ENCODE measurements at regions of chr17 and their contacts with region 1.

Region 1: GRCh38 chr17:50547035-50547735 is at the start of gene SPATA20:
- DNase-seq: peak; percentile 92
- ATAC-seq: peak; percentile 87
- H3K4me3 ChIP-seq: peak within 1 kb of the TSS in 4 of 5 experiments; percentile 20 to 62 (median 52)
- H3K4me3 Mint-ChIP-seq: peak within 1 kb of the TSS; percentile 84
- H3K27ac ChIP-seq: peak within 1 kb of the TSS in 1 of 2 donors; percentile 40
- H3K27ac Mint-ChIP-seq: peak within 1 kb of the TSS; percentile 78
- H3K4me1 ChIP-seq: peaks cover 14 to 21% of the 10 kb centered on the region in 2 donors
- H3K4me1 Mint-ChIP-seq: peaks cover 19% of the 10 kb centered on the region
- H3K27me3 ChIP-seq: peaks cover 0 to 11% (median 5%) of the 10 kb centered on the region in 4 experiments
- H3K27me3 Mint-ChIP-seq: peaks cover 7% of the 10 kb centered on the region
- CTCF ChIP-seq: peak; percentile 98
- total RNA-seq, gene SPATA20: 68.5 and 72.2 TPM in 2 replicates

Region 2: DNA sequence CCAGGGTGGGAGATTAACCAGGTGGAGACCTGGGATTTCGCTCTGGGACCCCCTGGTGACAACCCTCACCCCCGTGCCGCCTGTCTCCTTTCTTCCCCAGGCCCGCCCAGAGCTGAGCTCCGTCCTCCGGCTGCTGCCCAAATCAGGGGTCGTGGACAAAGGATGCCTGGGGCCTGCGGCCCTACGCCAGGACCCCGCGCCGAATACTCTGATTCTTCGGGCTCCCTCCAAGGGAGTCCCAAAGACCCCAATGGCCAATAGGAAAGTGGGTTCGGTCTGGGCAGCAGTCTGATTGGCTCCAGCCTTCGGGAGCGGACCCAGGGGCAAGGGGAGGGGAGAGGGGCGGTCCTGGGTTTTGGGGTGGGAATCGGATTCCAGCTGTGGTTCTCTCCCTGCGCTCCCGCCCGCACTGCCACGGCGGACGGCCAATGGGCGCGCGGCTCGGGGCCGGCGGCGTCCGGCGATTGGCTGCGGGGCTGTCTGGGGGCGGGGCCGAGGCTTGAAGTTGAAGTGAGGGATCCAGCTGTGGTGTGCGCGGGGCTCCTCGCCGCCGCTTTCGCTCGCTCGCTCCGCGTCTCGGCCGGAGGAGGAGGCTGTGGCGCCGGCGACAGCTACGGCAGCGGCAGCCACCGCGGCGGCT is 13.1 kb after region 1 on chr17 and contains the start of gene CACNA1G:
- CTCF ChIA-PET with region 1: interaction called, 5 read pairs
- POLR2A ChIA-PET with region 1: interaction called, 3 read pairs
- intact Hi-C with region 1: loop called (anchors 1 kb)
- DNase-seq: peak; percentile 90
- ATAC-seq: peak; percentile 89
- H3K4me3 ChIP-seq: peak within 1 kb of the TSS in 4 of 5 experiments; percentile 43 to 70 (median 60)
- H3K4me3 Mint-ChIP-seq: peak within 1 kb of the TSS; percentile 87
- H3K27ac ChIP-seq: no peak within 1 kb of the TSS
- H3K27ac Mint-ChIP-seq: no peak within 1 kb of the TSS
- H3K4me1 ChIP-seq: peaks cover 34 to 40% of the 10 kb centered on the region in 2 donors
- H3K4me1 Mint-ChIP-seq: peaks cover 30% of the 10 kb centered on the region
- H3K27me3 ChIP-seq: peaks cover 0 to 85% (median 37%) of the 10 kb centered on the region in 4 experiments
- H3K27me3 Mint-ChIP-seq: peaks cover 29% of the 10 kb centered on the region
- CTCF ChIP-seq: no peak
- total RNA-seq, gene CACNA1G: 0.05 and 0.12 TPM in 2 replicates

Region 3: GRCh38 chr17:50626037-50626574 is 78.9 kb after region 1 on chr17:
- CTCF ChIA-PET with region 1: interaction called, 45 read pairs
- POLR2A ChIA-PET with region 1: no interaction called
- intact Hi-C with region 1: no loop called
- DNase-seq: peak; percentile 69
- ATAC-seq: peak; percentile 70
- H3K4me3 ChIP-seq: no peak overlapping the region
- H3K4me3 Mint-ChIP-seq: no peak overlapping the region
- H3K27ac ChIP-seq: no peak overlapping the region
- H3K27ac Mint-ChIP-seq: no peak overlapping the region
- H3K4me1 ChIP-seq: peaks cover 0 to 6% of the 10 kb centered on the region in 2 donors
- H3K4me1 Mint-ChIP-seq: no peaks in the 10 kb centered on the region
- H3K27me3 ChIP-seq: peaks cover 0 to 61% (median 9%) of the 10 kb centered on the region in 4 experiments
- H3K27me3 Mint-ChIP-seq: peaks cover 45% of the 10 kb centered on the region
- CTCF ChIP-seq: peak; percentile 58

Region 4: GRCh38 chr17:50689956-50690886 is 143.0 kb after region 1 on chr17:
- CTCF ChIA-PET with region 1: interaction called, 5 read pairs
- POLR2A ChIA-PET with region 1: no interaction called
- intact Hi-C with region 1: loop called (anchors 1 kb)
- DNase-seq: no peak
- ATAC-seq: no peak
- H3K4me3 ChIP-seq: no peak overlapping the region
- H3K4me3 Mint-ChIP-seq: no peak overlapping the region
- H3K27ac ChIP-seq: no peak overlapping the region
- H3K27ac Mint-ChIP-seq: no peak overlapping the region
- H3K4me1 ChIP-seq: no peaks in the 10 kb centered on the region
- H3K4me1 Mint-ChIP-seq: no peaks in the 10 kb centered on the region
- H3K27me3 ChIP-seq: no peaks in the 10 kb centered on the region
- H3K27me3 Mint-ChIP-seq: no peaks in the 10 kb centered on the region
- CTCF ChIP-seq: no peak

Region 5: GRCh38 chr17:50956750-50957523 is 409.8 kb after region 1 on chr17:
- CTCF ChIA-PET with region 1: no interaction called
- POLR2A ChIA-PET with region 1: no interaction called
- intact Hi-C with region 1: loop called (anchors 1 kb)
- DNase-seq: peak; percentile 78
- ATAC-seq: peak; percentile 89
- H3K4me3 ChIP-seq: no peak overlapping the region
- H3K4me3 Mint-ChIP-seq: no peak overlapping the region
- H3K27ac ChIP-seq: no peak overlapping the region
- H3K27ac Mint-ChIP-seq: no peak overlapping the region
- H3K4me1 ChIP-seq: peaks cover 0 to 5% of the 10 kb centered on the region in 2 donors
- H3K4me1 Mint-ChIP-seq: peaks cover 2% of the 10 kb centered on the region
- H3K27me3 ChIP-seq: peaks cover 0 to 4% (median 0%) of the 10 kb centered on the region in 4 experiments
- H3K27me3 Mint-ChIP-seq: no peaks in the 10 kb centered on the region
- CTCF ChIP-seq: peak; percentile 79